Dendritic cell treated with granulocyte-macrophage colony-stimulating factor and Interleukin-4, amounts not matched to agents 40 ng/mL and 50 ng/mL, for 4 days (primary cell): ENCODE measurements at regions of chr11 and their contacts with region 1.

Region 1: DNA sequence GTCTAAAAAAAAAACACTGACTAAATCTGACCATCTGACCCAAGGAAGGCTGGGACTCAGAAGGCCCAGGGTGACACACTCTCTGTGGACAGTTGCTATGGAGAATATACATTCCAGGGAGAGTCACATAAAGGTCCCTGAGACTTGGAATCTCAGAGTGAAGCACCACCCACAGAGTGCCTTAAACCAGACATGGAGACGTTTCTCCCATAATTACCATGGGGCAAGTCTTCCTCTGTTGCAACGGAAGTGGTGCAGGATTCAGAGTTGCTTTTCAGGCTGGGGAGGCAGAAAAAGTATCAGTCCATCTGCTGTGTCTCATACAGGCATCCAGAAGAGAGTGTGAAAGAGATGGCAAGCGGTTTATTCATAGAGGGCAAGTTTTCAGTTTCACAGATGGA is 58.7 kb upstream of the SLN start:
- H3K4me3 Mint-ChIP-seq: no peak overlapping the region
- H3K27ac Mint-ChIP-seq: no peak overlapping the region
- H3K4me1 Mint-ChIP-seq: no peaks in the 10 kb centered on the region
- H3K27me3 Mint-ChIP-seq: peaks cover 4% of the 10 kb centered on the region

Region 2: DNA sequence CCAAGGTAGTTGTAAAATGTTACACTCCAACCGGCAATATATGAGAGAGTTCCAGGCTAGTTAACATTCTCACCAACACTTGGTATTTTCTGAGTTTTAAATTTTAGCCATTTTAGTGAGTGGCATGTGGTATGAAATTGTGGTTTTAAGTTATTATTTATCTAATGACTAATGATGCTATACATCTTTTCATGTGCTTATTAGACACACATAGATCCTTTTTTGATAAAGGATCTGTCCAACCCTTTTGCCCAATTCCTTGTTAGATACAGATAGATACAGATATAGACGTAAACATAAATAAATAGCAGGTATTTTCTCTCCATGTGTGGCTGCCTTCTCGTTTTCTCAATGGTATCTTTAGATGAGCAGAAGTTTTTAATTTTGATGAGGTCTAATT is 244.4 kb before region 1 on chr11:
- intact Hi-C with region 1: no loop called
- H3K4me3 Mint-ChIP-seq: no peak overlapping the region
- H3K27ac Mint-ChIP-seq: no peak overlapping the region
- H3K4me1 Mint-ChIP-seq: no peaks in the 10 kb centered on the region
- H3K27me3 Mint-ChIP-seq: no peaks in the 10 kb centered on the region

Region 3: DNA sequence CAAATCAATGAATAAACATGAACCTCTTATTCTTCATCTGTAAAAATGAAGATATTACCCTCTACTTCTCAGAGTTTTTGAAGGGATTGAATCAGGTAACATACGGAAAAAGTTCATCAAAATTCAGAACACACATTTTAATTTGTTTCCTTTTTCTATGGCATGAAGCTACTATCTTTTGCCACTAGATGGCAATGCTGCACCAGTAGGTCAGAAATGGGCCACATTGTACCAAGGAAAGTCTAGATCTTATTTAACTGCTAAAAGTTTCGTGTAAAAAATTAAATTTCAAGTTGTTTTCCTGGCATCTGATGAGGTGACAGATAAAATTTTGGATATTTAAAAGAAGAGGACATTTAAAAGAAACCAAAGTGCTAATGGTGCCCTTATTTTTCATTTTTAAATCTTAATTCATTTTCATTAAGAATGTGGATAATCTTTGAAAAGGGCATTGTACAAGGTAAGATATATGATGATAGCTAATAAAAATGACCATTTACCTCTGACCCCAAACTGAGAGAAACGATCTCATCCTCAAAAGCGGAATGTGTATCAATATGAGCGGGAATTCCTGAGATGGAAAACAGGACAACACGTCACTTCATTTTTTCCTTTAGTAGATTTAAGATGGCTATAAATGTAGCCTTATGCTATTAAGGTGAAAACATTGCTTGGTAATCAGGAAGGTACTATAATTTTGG is 221.1 kb before region 1 on chr11:
- intact Hi-C with region 1: loop called (anchors 5 kb)
- H3K4me3 Mint-ChIP-seq: no peak overlapping the region
- H3K27ac Mint-ChIP-seq: no peak overlapping the region
- H3K4me1 Mint-ChIP-seq: no peaks in the 10 kb centered on the region
- H3K27me3 Mint-ChIP-seq: no peaks in the 10 kb centered on the region

Region 4: GRCh38 chr11:107747622-107748021 is 22.9 kb before region 1 on chr11:
- intact Hi-C with region 1: no loop called
- H3K4me3 Mint-ChIP-seq: no peak overlapping the region
- H3K27ac Mint-ChIP-seq: no peak overlapping the region
- H3K4me1 Mint-ChIP-seq: no peaks in the 10 kb centered on the region
- H3K27me3 Mint-ChIP-seq: peaks cover 16% of the 10 kb centered on the region